ENCODE measurements at regions of chr11 and their contacts with region 1.

Region 1: DNA sequence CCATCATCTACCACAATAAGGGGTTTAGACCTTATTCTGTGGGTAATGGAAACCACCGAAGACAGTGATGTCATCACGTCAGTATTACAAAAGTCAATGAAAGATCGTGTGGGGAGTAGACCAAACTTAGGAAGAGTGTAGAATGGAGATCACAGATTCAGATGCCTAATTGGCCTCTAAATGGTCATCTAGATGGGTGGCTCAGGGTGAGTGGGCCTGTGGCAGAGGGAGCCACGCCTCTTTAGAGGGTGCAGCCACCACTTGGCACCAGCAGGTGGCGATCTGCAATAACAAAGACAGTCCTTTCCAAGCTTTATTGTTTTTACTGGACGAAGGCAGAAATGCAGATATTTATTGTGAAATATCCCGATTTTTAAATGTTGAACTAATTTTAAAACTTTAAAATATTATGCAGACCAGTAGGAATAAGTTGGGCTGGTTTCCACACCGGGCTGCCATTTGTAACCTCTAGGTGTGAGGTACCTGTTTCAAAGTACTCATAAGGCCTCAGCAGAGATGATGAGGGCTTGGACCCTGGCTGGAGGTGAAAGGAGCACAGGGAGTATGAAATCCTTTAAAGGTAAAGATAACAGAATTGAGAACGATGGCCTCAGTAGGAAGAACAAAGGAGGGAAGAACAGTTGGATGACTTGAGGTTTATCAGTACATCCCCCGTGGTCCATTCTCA is 222.0 kb downstream of the DBX1 start:
- DNase-seq: peak; percentile 52
- ATAC-seq: peak in 1 of 2 donors; percentile 68

Region 2: GRCh38 chr11:20355221-20356219 is 417.2 kb after region 1 on chr11:
- intact Hi-C with region 1: loop called in 1 of 2 experiments (anchors 10 kb)
- DNase-seq: peak; percentile 33
- ATAC-seq: peak in 1 of 2 donors; percentile 75

Measured in left cardiac atrium (tissue), 4 donors.